ENCODE measurements at regions of chr15 and their contacts with region 1.

Region 1: GRCh38 chr15:83930392-83931205 is 276.7 kb downstream of the ADAMTSL3 start:
- DNase-seq: peak; percentile 77
- H3K4me3 ChIP-seq: no peak overlapping the region
- H3K27ac ChIP-seq: peak overlapping the region; percentile 11 to 77 (median 74)
- H3K4me1 ChIP-seq: peaks cover 0 to 28% (median 26%) of the 10 kb centered on the region in 4 donors
- H3K27me3 ChIP-seq: no peaks in the 10 kb centered on the region
- CTCF ChIP-seq: no peak
- EP300 ChIP-seq: peak in 3 of 4 donors; percentile 56 to 90 (median 66)
- POLR2A ChIP-seq: no peak

Region 2: DNA sequence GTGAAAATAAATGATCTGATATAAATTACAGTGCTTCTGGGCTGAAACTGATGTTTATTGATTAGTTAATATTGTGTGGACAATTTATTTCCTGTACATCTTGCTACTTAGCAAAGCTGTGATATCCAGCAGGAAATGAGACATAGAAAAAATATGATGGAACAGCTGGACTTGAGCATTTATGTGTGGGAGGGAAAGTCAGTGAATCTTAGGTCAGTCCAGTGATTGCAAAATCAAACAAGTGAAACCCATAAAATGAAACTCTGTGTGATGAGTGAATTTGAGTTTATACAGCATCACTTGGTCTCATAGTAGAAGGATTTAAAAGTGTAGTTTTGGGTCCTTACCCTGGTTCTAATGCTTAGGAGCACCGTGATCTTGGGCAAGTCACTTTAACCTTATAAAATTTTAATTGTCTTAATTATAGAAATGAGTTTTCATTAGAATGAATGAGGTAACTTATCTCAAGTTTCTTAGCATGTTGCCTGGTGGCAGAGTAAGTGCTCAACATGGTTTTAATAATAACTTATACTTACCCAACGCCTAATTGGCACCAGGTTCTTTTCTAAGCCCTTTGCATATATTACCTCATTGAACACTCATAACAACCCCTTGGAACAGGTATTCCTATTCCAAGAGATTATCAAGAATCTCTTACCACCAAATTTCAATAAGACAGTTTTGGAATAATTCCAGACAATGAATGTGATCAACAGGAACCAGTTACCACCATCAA is 82.1 kb before region 1 on chr15:
- intact Hi-C with region 1: loop called (anchors 5 kb)
- DNase-seq: no peak
- H3K4me3 ChIP-seq: no peak overlapping the region
- H3K27ac ChIP-seq: peak overlapping the region; percentile 54 to 76 (median 66)
- H3K4me1 ChIP-seq: peaks cover 0 to 83% (median 60%) of the 10 kb centered on the region in 4 donors
- H3K27me3 ChIP-seq: no peaks in the 10 kb centered on the region
- CTCF ChIP-seq: no peak
- EP300 ChIP-seq: no peak
- POLR2A ChIP-seq: no peak

Region 3: DNA sequence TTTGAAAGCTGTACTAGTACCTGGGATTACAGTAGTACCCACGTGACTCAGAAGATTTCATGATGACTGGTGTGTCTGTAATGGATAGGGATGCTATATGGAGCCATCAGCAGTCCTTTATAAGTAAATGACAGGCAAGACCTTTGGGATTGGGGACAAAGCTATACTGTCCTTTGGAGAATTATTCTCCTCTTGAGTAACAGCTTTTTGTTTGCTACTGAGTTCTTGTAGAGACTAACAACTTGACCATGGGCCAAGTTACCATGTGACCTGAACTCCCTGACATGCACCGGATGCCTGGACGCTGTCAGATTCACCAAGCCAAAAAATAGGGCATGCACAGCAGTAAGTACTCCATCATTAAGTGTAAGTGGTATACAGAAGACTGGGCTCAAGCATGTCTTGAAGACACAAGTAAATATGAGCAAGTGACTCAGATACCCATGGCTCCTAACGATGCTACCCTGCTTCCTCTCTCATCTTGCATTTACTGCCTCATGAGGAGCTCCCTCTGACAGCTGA is 772.4 kb after region 1 on chr15:
- intact Hi-C with region 1: no loop called
- DNase-seq: peak; percentile 86
- H3K4me3 ChIP-seq: no peak overlapping the region
- H3K27ac ChIP-seq: peak overlapping the region; percentile 39 to 63 (median 51)
- H3K4me1 ChIP-seq: peaks cover 0 to 19% (median 12%) of the 10 kb centered on the region in 4 donors
- H3K27me3 ChIP-seq: no peaks in the 10 kb centered on the region
- CTCF ChIP-seq: no peak
- EP300 ChIP-seq: no peak
- POLR2A ChIP-seq: no peak